PC-9 (cell line): ENCODE measurements at regions of chr19 and their contacts with region 1.

Region 1: DNA sequence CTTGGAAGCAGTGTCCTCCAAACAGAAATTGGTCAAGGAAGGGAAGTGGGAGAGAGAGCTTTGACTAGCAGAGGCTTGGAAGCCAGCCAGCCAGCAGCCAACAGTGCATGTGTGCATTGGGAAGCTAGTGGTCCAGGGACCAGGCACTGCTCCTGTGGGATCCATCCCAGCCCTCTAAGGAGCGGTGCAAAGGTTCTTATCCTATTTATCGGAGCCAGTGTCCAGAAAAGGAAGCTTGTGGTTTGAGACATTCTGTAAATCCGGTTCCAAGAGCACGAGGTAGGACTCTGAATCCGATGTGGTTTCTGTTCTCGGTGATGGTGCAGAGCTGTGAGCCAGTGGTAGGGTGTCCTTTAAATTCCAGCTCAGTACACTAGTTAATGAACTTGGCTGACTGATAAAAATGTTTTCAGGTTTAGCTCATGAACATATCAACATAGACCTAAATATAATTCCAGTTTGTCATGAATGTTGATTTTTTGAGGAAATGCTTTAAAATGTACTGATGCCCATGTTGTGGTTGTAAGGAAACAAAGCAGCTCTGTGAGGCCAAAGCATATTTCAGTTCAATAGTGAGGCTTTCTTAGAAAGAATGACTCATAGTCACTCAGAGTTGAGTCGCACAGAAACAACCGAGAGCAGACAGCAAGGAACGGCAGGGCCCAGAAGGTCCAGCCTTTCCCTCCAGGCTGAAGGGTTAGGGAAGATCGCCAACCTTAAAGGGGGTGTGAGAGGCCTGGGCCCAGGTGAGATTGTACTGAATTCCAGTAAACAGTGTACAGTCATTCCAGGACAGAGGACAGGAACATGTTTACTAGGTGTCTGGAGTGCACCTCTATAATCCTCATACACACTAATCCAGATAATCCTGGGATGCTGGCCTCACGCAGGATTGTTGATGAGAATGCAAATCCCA is 21.5 kb upstream of the GARRE1 start:
- DNase-seq: peak; percentile 64 to 87
- H3K4me3 ChIP-seq: no peak overlapping the region
- H3K27ac ChIP-seq: peak overlapping the region; percentile 51
- H3K4me1 ChIP-seq: peaks cover 17% of the 10 kb centered on the region
- H3K27me3 ChIP-seq: no peaks in the 10 kb centered on the region
- CTCF ChIP-seq: no peak

Region 2: DNA sequence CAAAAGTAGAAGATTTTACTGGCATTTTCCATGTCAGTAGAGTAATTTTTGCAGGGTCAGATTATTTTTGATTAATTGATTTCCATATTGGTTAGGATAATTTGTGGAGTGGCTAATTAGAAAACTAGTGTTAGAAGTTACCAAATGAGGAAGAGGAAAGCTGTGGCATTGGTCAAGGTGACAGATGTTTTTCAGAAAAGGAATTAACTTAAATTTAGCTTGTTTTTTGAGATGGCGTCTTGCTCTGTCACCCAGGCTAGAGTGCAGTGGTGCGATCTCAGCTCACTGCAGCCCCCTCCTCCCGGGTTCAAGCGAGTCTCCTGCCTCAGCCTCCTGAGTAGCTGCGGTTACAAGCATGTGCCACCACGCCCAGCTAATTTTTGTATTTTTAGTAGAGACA is 31.7 kb before region 1 on chr19:
- CTCF ChIA-PET with region 1: no interaction called
- POLR2A ChIA-PET with region 1: interaction called, 13 read pairs
- intact Hi-C with region 1: no loop called
- DNase-seq: no peak
- H3K4me3 ChIP-seq: no peak overlapping the region
- H3K27ac ChIP-seq: no peak overlapping the region
- H3K4me1 ChIP-seq: no peaks in the 10 kb centered on the region
- H3K27me3 ChIP-seq: no peaks in the 10 kb centered on the region
- CTCF ChIP-seq: no peak

Region 3: DNA sequence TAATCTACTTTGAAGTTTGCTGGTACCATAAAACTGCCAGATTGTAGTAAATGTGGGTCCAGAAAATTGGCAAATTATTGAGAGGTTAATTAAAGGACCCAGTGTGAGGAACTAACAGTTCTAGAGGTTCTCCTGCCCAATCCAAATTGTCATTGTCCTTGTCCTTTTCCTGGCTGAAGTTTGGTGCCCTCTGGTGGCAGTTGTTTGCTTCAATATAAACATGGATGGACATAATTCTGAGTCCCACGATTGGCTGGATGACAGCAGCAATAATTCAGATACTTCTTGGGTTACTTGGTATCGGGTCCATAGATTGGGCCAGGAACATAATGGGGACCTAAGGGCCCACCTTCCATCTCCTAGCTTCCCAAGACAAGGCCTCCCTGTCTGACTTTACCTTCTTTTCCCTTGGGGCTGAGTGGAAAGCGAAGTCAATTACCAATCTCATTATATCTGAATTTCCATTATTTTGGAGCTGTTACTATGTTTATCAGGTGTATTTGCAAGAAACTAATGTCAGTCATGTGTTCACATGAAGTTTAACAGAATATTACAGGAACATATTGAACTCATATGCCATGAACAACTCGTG is 12.3 kb before region 1 on chr19:
- CTCF ChIA-PET with region 1: interaction called, 14 read pairs
- POLR2A ChIA-PET with region 1: no interaction called
- intact Hi-C with region 1: loop called (anchors 1 kb)
- DNase-seq: peak in 1 of 2 experiments; percentile 40
- H3K4me3 ChIP-seq: no peak overlapping the region
- H3K27ac ChIP-seq: no peak overlapping the region
- H3K4me1 ChIP-seq: peaks cover 24% of the 10 kb centered on the region
- H3K27me3 ChIP-seq: no peaks in the 10 kb centered on the region
- CTCF ChIP-seq: peak; percentile 85

Region 4: GRCh38 chr19:34260771-34261173 is 27.9 kb after region 1 on chr19:
- CTCF ChIA-PET with region 1: interaction called, 18 read pairs
- POLR2A ChIA-PET with region 1: no interaction called
- intact Hi-C with region 1: no loop called
- DNase-seq: no peak
- H3K4me3 ChIP-seq: no peak overlapping the region
- H3K27ac ChIP-seq: no peak overlapping the region
- H3K4me1 ChIP-seq: peaks cover 24% of the 10 kb centered on the region
- H3K27me3 ChIP-seq: no peaks in the 10 kb centered on the region
- CTCF ChIP-seq: no peak

Region 5: DNA sequence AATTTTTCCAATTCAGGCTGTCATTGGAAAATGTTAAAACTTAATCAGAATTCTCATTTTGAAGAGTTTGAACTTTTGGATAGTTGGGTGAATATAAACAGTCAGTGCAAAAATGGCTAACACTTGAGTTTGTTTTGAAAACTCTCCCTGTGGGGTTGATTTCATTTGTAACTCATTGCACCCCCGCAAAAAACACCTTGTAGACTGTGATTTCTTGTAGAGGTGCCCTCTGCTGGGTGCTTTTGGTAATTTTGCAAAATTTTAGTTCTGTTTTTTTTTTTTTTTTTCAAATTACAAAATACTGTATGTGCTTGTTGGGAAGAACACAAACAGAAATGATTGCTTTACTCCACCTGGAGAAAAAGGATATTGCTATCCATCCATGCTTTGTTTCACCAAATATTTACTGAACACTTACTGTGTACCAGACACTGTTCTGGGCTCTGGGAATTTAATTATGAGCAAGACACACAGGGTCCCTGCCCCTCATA is 104.0 kb after region 1 on chr19:
- CTCF ChIA-PET with region 1: no interaction called
- POLR2A ChIA-PET with region 1: interaction called, 3 read pairs
- intact Hi-C with region 1: loop called (anchors 2 kb)
- DNase-seq: peak in 1 of 2 experiments; percentile 19
- H3K4me3 ChIP-seq: no peak overlapping the region
- H3K27ac ChIP-seq: no peak overlapping the region
- H3K4me1 ChIP-seq: no peaks in the 10 kb centered on the region
- H3K27me3 ChIP-seq: no peaks in the 10 kb centered on the region
- CTCF ChIP-seq: peak; percentile 91

Region 6: DNA sequence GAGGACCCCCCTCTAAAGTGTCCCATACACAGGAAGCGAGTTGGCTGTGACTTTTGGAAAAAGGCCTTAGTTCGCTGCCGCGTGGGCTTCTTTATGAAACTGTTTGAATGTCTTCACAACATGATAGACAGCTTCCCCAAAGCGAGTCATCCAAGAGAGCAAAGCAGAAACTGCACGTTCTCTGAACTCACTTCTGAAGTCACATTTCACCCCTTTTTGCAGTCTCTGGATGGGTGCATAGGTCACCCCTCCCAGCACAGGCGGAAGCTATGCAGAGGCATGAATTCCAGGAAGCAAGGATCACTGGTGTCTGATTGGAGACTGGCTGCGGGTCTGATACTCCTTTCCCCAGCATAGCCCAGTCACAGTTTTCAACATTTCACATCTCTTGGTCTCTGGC is 142.8 kb after region 1 on chr19:
- CTCF ChIA-PET with region 1: no interaction called
- POLR2A ChIA-PET with region 1: no interaction called
- intact Hi-C with region 1: no loop called
- DNase-seq: no peak
- H3K4me3 ChIP-seq: no peak overlapping the region
- H3K27ac ChIP-seq: no peak overlapping the region
- H3K4me1 ChIP-seq: no peaks in the 10 kb centered on the region
- H3K27me3 ChIP-seq: no peaks in the 10 kb centered on the region
- CTCF ChIP-seq: no peak